AG04449 (cell line): ENCODE measurements at regions of chr2 and their contacts with region 1.

Region 1: DNA sequence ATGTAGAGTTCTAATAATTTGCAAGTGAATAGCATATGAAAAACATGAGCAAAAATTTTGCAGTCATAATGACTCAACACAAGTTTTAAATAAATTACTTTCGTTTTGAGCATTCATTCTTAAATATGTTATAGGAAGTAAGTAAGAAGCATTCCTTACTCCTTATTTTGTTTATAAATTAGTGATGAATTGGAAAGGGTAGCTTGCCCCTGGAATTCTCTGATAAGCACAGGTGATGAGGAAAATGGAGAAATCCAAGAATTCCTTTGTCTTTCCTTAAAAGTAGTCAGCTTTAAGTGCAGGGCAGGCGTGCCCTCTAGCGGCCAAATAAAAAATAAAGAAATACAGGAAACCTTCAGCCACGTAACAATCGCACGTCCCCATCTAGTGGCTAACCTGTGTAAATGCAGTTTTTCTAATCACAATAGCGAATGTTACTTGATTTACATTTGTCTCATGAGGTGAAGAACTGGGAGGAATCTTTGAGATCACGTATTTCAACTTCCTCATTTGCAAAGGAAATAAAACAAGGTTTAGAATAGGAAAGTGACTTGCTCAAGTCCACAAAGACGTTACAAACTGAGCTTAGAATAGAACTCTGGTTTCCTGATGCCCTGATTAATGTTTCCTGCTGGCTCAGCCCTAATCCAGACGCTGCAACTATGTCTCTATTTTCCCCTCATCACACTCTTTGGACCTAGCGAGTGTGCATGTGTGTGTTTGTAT is 47.2 kb upstream of the ZNG1B start:
- DNase-seq: peak; percentile 28
- H3K4me3 ChIP-seq: no peak overlapping the region
- CTCF ChIP-seq: peak; percentile 80

Region 2: DNA sequence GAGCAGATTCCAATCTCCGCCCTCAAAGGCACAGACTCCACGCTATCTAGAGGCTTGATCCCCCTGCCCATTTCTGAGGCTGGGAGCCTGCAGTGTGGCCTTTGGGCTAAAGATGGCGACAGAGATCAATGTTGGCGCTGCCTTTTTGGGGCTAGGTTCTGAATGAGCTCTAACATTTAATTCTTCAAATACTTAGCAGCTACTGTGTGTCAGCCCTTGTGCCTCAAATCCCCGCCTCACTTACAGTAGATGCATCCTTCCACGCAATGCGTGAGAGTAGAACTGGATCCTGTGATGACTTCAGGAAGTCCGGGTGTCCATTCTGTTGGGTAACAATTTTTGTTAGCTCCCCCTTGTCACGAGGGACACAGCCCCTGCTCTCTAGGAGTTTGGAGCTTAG is 310.2 kb before region 1 on chr2:
- CTCF ChIA-PET with region 1: interaction called, 20 read pairs
- POLR2A ChIA-PET with region 1: no interaction called
- DNase-seq: no peak
- H3K4me3 ChIP-seq: no peak overlapping the region
- CTCF ChIP-seq: peak; percentile 70

Region 3: DNA sequence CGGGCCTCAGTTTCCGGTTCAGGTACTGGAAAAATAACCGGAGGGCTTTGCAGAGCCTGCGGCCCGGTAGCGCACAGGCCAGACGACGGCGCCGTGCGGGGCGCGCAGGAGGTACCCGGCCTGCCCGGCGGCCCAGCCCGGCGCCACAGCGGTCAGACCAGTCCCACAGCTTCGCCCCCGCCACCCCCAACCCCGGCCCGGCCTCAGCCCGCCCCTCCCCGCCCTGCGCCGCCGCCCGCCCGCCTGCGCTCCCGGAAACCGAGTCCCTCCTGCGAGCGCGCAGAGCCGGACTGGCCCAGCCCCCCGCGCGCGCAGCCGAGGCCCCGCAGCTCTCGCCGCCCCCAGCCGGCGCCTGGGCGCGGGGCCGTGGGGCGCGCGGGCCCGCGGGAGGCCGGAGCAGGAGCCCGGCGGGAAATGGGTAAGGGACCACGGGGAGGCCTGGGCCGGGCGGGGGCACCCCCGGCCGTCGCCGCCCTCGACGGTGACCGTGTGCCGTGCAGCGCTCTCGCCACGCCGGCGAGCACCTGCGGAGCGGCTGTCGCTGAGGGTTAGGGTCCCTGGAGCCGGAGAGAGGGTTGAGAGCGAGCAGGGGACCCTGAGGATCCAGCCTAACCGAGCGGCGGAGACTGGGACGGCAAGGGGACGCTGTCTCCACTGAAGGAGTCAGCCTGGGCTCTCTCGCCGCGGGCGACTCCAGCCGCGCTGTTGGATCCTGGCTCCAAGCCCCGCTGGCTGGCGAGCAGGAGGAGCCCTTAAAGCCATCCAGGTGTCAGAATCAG is 233.0 kb before region 1 on chr2:
- CTCF ChIA-PET with region 1: interaction called, 14 read pairs
- POLR2A ChIA-PET with region 1: no interaction called
- DNase-seq: no peak
- H3K4me3 ChIP-seq: peak overlapping the region; percentile 50
- CTCF ChIP-seq: no peak

Region 4: DNA sequence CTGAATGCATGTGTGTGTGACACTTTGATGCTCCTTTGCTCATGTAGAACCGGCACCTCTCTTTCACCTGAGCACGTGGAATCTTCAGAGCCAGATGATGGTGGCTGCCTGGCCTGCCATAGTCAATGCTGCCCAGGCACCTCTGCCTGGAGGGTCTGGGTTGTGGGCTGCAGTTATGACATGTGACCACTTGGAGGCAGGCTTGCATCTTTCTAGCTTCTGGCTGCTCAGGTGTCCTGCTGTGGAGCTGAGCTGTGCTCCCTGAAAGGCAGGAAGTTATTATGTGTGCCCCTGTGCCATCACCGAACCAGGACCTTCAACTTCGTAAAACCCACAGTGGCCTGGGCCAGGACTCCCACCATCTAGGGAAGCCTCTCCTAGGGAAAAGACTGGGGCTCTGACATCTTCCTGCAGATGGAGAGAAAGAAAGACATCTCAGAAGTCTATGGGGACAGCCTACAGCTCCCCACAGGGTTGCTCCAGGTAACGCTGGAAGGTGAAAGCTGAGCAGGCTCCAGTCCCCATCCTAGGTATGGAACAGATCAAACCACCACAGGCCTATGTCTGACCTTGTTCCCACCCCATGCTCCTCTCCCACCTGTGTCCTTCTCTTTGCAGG is 186.3 kb before region 1 on chr2:
- CTCF ChIA-PET with region 1: interaction called, 112 read pairs
- POLR2A ChIA-PET with region 1: no interaction called
- DNase-seq: no peak
- H3K4me3 ChIP-seq: no peak overlapping the region
- CTCF ChIP-seq: peak; percentile 89

Region 5: GRCh38 chr2:113225263-113226259 is 164.7 kb before region 1 on chr2:
- CTCF ChIA-PET with region 1: interaction called, 12 read pairs
- POLR2A ChIA-PET with region 1: no interaction called
- DNase-seq: no peak
- H3K4me3 ChIP-seq: no peak overlapping the region
- CTCF ChIP-seq: no peak

Region 6: GRCh38 chr2:113248997-113249770 is 141.1 kb before region 1 on chr2:
- CTCF ChIA-PET with region 1: interaction called, 86 read pairs
- POLR2A ChIA-PET with region 1: no interaction called
- DNase-seq: no peak
- H3K4me3 ChIP-seq: no peak overlapping the region
- CTCF ChIP-seq: peak; percentile 91

Region 7: DNA sequence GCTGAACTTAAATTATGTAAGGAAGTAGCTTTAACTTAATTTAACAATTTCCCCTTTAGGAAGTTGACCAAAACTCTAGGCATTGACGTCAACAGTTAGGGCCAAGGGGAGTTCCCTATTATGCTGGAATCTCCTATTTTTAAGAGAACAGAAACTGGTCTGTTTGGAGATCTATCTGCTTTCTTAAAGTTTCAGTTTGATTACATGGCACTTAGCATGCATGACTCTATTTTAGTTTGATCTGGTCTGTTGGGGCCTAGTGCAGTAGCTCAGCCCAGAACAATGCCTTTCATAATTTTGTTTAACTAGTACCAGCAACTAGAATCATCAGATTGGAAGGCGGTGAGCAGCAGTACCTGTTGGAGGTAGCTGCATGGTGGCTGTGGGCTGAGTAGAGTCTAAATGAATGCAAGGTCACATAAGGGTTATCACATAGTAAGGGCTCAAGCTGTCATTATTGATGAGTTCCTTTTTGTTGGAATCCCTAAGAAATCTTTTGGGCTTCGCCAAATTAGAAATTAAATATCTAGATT is 13.3 kb before region 1 on chr2:
- CTCF ChIA-PET with region 1: interaction called, 23 read pairs
- POLR2A ChIA-PET with region 1: no interaction called
- DNase-seq: no peak
- H3K4me3 ChIP-seq: no peak overlapping the region
- CTCF ChIP-seq: no peak

Region 8: DNA sequence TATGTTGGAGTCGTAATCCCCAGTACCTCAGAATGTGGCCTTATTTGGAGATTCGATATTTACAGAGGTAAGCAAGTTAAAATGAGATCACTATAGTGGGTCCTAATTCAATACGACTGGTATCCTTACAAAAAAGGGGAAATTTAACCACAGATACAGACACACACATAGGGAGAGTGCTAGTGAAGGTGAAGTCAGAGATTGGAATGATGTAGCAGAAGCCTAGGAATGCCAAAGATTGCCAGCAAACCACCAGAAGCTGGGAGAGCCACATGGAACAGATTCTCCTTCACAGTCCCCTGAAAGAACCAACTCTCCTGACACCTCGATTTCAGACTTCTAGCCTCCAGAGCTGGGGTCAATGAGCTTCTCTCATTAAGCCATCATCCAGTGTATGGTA is 481.9 kb after region 1 on chr2:
- CTCF ChIA-PET with region 1: no interaction called
- POLR2A ChIA-PET with region 1: no interaction called
- DNase-seq: peak; percentile 49
- H3K4me3 ChIP-seq: no peak overlapping the region
- CTCF ChIP-seq: no peak